ENCODE measurements at regions of chr2 and their contacts with region 1.

Region 1: DNA sequence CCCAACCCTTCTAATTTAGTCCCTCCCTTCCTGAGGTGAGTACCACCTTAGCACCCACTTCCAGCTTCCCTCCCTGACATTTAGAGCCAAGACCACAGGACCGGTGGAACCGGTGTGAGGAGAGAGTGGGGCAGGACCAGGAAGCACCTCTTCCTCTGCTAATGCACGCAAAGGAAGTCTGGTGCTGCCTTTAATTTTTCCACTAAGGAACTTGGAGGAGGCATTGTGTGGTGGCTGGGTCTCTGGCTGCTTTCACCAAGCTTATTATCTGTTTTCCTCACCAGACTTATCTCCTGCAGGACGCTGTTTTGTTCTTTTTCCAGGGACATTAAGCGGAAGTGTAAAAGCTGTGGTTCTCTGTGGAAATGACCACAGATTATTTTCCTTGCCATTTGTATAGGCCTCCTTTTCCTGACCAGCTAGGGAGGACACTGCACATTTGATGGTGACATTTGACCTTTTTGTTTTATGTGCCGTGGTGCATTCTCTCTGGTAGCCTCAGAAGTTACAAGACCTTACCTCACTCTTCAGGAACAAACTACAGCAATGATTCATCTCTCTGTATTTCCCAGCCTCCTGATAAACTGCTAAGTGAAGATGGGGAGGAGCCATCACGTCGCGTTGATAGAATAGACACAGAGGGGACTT is 39.8 kb upstream of the SPTBN1 start:
- DNase-seq: no peak

Region 2: GRCh38 chr2:54330926-54331835 is 85.1 kb before region 1 on chr2:
- intact Hi-C with region 1: no loop called
- DNase-seq: no peak

Region 3: DNA sequence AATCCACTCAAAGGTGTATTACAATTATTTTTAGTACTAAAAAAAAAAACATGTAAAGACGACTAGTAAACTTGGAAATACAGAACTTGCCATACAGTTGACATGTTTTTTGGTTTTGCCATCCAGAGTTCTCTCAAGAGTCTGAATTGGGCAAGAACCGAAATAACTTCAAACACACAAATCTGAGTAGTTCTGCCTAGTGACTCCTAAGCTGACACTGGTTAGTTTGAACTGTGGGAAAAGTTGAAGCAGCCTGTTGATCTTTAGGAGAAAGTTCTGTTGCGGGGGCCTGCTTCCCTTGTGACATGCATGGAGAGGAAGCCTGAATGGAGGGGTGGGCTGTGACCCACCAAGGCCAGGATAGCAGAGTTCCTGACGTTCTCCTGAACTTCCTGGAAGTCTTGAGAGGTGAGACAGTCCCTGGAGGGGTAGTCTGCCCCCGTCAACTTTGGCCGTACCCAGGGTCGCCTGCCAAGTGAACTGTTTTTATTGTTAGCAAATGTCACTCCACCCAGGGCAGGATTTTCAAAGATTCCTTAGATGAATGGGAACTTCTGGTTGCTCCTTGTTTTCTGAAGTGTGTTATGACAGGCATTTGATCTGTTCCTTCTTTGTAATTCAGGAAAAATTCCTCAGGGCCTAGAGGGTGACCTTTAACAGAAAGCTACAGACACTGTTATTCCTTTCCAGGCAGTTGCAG is 45.7 kb before region 1 on chr2:
- intact Hi-C with region 1: loop called (anchors 5 kb)
- DNase-seq: no peak